Gastrocnemius medialis (tissue), 4 donors: ENCODE measurements at regions of chr15 and their contacts with region 1.

Region 1: GRCh38 chr15:88834211-88834812 is 31.1 kb downstream of the ACAN start:
- DNase-seq: no peak
- ATAC-seq: peak in 1 of 2 donors; percentile 26
- H3K4me3 ChIP-seq: no peak overlapping the region
- H3K27ac ChIP-seq: no peak overlapping the region
- H3K4me1 ChIP-seq: no peaks in the 10 kb centered on the region
- H3K27me3 ChIP-seq: no peaks in the 10 kb centered on the region
- CTCF ChIP-seq: peak in 4 of 5 experiments; percentile 22 to 63 (median 40)
- POLR2A ChIP-seq: no peak

Region 2: DNA sequence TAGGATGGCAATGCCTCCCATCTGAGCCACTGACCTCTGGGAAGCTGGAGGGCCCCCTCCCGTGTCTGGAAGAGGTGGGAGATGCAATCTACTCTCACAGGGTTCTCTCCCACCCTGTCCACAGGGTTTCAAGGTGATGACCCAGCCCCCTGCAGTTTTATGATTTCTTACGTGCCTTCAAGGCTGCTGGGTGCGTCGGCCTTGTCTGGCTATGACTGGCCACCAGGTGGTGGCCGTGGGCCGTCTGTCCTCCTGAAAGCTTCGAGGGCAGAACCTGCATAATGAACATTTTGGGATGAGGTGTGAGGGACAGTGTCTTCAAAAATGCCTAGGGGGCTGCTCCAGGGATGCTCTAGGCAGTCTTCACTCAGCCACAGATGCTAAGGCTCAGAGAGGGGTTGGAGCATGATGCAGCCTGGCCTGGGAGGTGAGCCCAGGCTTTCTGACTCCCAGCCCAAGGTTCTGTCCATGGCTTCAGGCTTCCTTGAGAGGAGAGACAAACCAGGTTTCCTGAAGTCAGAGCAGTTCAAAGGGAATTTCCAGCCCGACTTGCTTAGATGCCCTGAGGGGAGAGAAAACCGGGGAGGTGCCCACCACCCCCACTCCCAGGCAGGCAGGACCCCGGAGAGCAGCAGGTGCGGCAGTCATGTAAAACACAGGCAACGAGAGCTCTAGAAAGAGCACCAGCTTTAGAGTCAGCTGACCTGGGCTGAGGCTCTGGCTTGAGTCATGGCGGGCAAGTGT is 176.8 kb before region 1 on chr15:
- in situ Hi-C with region 1: loop called in 2 of 4 experiments (anchors 25 kb)
- intact Hi-C with region 1: loop called (anchors 1 kb)
- DNase-seq: no peak
- ATAC-seq: no peak
- H3K4me3 ChIP-seq: no peak overlapping the region
- H3K27ac ChIP-seq: no peak overlapping the region
- H3K4me1 ChIP-seq: peaks cover 0 to 2% of the 10 kb centered on the region in 2 donors
- H3K27me3 ChIP-seq: no peaks in the 10 kb centered on the region
- CTCF ChIP-seq: peak; percentile 20 to 70 (median 54)
- POLR2A ChIP-seq: no peak